Activated CD4-positive, alpha-beta T cell treated with anti-CD3 and anti-CD28 coated beads, Interleukin-2, amount 10 ng/mL, durations not matched to agents 24 days and 14 days (primary cell): ENCODE measurements at regions of chr7 and their contacts with region 1.

Region 1: DNA sequence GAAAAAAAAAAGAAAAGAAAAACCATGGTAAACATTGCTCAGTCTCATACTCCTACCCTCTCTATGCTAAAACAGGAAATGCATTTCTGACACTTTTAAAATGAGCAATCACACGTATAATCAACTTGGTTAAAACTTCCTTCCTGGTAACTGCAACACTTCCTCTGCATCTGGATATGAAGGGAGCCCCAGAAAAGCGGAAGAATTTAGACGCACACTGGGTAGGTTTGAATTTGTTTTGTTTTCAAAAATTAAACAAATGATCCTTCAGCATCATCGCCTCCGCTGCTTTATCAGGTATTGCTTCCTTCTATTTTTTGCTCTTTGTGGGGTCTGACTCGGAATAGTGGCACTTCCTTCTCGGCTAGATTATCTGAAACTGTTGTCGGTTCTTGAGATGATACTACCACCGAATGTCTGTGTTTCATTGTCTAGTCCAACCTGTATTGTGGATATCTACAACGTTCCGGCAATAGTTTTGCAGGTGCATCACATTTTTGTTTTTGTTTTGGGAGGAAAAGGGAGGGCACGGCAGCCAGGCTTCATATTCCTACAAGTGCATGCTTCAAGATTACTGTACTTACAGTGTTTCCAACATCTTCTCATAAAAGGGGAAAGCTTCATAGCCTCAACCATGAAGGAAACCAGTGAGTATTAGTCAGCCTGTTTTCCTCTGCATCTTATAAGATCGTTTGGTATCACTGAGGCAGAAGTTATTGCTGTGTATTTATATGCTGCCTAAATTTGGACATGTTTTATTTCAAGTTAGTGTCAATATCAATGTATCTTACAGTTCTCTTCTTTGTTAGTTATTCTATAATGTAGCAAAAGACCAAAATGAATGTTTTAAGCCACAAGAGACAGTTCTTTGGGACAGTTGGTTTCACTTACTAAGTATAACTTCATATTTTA is at the start of gene PIK3CG:
- DNase-seq: peak; percentile 80
- H3K4me3 Mint-ChIP-seq: peak within 1 kb of the TSS; percentile 95
- H3K27ac Mint-ChIP-seq: peak within 1 kb of the TSS; percentile 93
- H3K4me1 Mint-ChIP-seq: peaks cover 42% of the 10 kb centered on the region
- H3K27me3 Mint-ChIP-seq: no peaks in the 10 kb centered on the region
- total RNA-seq, gene PIK3CG: 28.1 and 29.2 TPM in 2 replicates

Region 2: GRCh38 chr7:106774768-106775551 is 90.4 kb before region 1 on chr7:
- intact Hi-C with region 1: loop called (anchors 2 kb)
- DNase-seq: no peak
- H3K4me3 Mint-ChIP-seq: no peak overlapping the region
- H3K27ac Mint-ChIP-seq: peak overlapping the region; percentile 45
- H3K4me1 Mint-ChIP-seq: peaks cover 28% of the 10 kb centered on the region
- H3K27me3 Mint-ChIP-seq: no peaks in the 10 kb centered on the region

Region 3: DNA sequence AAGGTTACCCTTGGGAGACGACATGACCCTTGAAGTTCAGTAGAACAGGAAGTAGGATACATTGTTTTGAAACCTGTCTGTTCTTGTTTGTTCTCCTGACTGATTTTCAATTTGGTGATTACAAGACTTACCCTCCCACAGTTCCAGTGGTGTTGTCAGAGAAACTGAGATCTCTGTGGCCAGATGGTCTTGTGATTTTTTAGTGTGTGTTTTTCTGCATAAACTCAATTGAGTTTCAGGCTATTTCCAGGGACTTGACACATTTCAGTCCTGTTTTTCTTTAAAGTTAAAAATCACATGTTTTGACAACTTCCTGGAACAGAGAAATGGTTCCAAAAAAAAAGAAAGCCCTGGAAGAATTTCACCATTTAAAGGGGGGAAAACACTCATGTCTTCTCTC is 22.0 kb after region 1 on chr7:
- intact Hi-C with region 1: loop called (anchors 1 kb)
- DNase-seq: no peak
- H3K4me3 Mint-ChIP-seq: no peak overlapping the region
- H3K27ac Mint-ChIP-seq: peak overlapping the region; percentile 77
- H3K4me1 Mint-ChIP-seq: peaks cover 18% of the 10 kb centered on the region
- H3K27me3 Mint-ChIP-seq: no peaks in the 10 kb centered on the region

Region 4: GRCh38 chr7:107051376-107051775 is 186.0 kb after region 1 on chr7:
- intact Hi-C with region 1: loop called (anchors 5 kb)
- DNase-seq: no peak
- H3K4me3 Mint-ChIP-seq: no peak overlapping the region
- H3K27ac Mint-ChIP-seq: no peak overlapping the region
- H3K4me1 Mint-ChIP-seq: peaks cover 6% of the 10 kb centered on the region
- H3K27me3 Mint-ChIP-seq: peaks cover 62% of the 10 kb centered on the region

Region 5: DNA sequence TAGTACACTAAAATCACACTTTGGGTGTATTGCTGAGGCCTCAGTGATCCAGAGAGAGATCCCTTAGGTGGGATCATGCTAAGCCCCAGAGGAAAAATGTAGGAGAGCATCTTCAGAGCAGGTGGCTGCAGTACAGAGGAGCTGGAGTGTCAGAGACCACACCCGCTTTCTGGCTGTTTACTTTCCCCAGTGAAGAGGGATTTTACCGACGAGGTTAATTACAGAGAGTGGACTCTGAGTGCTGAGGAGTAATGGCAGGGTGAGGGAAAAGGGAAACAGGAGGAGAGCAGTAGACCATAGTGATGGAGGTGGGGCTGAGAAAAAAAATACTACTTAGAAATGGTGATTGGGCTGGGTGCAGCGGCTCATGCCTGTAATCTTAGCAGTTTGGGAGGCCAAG is 260.1 kb after region 1 on chr7:
- intact Hi-C with region 1: loop called (anchors 5 kb)
- DNase-seq: no peak
- H3K4me3 Mint-ChIP-seq: peak overlapping the region; percentile 84
- H3K27ac Mint-ChIP-seq: peak overlapping the region; percentile 87
- H3K4me1 Mint-ChIP-seq: peaks cover 17% of the 10 kb centered on the region
- H3K27me3 Mint-ChIP-seq: no peaks in the 10 kb centered on the region